Activated naive CD4-positive, alpha-beta T cell treated with anti-CD3 and anti-CD28 coated beads for 36 hours (primary cell): ENCODE measurements at regions of chr2 and their contacts with region 1.

Region 1: DNA sequence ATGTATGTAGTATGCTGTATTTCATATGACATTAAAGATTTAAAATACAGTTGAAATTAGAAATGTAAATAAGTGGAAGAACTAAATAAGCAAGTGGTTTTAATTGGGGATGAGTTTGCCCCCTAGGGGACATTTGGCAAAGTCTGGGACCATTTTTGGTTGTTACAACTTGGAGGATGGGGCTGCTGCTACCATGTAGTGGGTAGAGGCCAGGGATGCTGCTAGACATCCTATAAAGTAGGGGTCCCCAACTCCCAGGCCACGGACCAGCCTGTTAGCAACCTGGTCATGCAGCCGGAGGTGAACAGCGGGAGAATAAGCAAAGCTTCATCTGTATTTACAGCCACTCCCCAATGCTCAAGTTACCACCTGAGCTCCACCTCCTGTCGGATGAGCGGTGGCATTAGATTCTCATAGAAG is 27.9 kb upstream of the ASNSD1 start:
- DNase-seq: peak; percentile 35
- H3K4me3 Mint-ChIP-seq: no peak overlapping the region
- H3K27ac Mint-ChIP-seq: no peak overlapping the region
- H3K4me1 Mint-ChIP-seq: no peaks in the 10 kb centered on the region
- H3K27me3 Mint-ChIP-seq: no peaks in the 10 kb centered on the region

Region 2: GRCh38 chr2:189466660-189467059 is 166.7 kb before region 1 on chr2:
- CTCF ChIA-PET with region 1: interaction called, 4 read pairs
- intact Hi-C with region 1: loop called (anchors 2 kb)
- DNase-seq: no peak
- H3K4me3 Mint-ChIP-seq: no peak overlapping the region
- H3K27ac Mint-ChIP-seq: no peak overlapping the region
- H3K4me1 Mint-ChIP-seq: no peaks in the 10 kb centered on the region
- H3K27me3 Mint-ChIP-seq: no peaks in the 10 kb centered on the region

Region 3: DNA sequence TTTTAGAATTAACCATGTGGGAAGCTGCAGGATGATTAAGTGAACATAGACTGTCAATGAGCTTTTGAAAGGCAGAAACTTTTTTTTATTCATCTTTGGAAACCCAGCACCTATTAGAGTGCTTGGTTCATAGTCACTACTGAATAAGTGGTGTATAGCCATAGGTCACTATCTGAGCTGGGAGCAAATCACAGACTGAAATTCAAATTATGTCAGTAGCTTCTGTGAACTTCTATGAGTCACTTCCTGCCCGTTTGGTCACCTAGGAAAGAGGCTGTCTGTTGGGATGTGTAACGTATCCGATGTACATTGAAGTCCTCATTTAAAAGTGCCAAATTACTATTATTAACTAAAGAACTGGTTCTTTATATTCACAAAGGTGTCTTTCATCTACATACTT is 32.4 kb before region 1 on chr2:
- CTCF ChIA-PET with region 1: interaction called, 4 read pairs
- intact Hi-C with region 1: loop called (anchors 1 kb)
- DNase-seq: no peak
- H3K4me3 Mint-ChIP-seq: no peak overlapping the region
- H3K27ac Mint-ChIP-seq: no peak overlapping the region
- H3K4me1 Mint-ChIP-seq: peaks cover 1% of the 10 kb centered on the region
- H3K27me3 Mint-ChIP-seq: no peaks in the 10 kb centered on the region